K562 (cell line): ENCODE measurements at regions of chr16 and their contacts with region 1.

Region 1: GRCh38 chr16:4402439-4403132 is 13.8 kb downstream of the CORO7 start:
- DNase-seq: peak; percentile 84 to 90 (median 86)
- ATAC-seq: peak; percentile 94
- H3K4me3 ChIP-seq: peak overlapping the region; percentile 25; the same call in 1 of the 2 replicates
- H3K27ac ChIP-seq: no peak overlapping the region; the same call in 2 of the 3 replicates
- H3K4me1 ChIP-seq: peaks cover 0 to 29% of the 10 kb centered on the region in 2 experiments; a peak in 2 of 5 replicates
- H3K27me3 ChIP-seq: no peaks in the 10 kb centered on the region
- CTCF ChIP-seq: peak; percentile 70 to 90 (median 79)
- EP300 ChIP-seq: no peak
- POLR2A ChIP-seq: no peak
- RAD21 ChIP-seq: peak; percentile 91

Region 2: GRCh38 chr16:3983081-3983520 is 419.5 kb before region 1 on chr16:
- CTCF ChIA-PET with region 1: interaction called, 3 read pairs
- POLR2A ChIA-PET with region 1: no interaction called
- in situ Hi-C with region 1: no loop called
- intact Hi-C with region 1: loop called (anchors 10 kb)
- DNase-seq: peak; percentile 78 to 82 (median 80)
- ATAC-seq: peak; percentile 99
- H3K4me3 ChIP-seq: no peak overlapping the region
- H3K27ac ChIP-seq: no peak overlapping the region
- H3K4me1 ChIP-seq: peaks cover 0 to 38% of the 10 kb centered on the region in 2 experiments; a peak in 3 of 5 replicates
- H3K27me3 ChIP-seq: peaks cover 61 to 97% of the 10 kb centered on the region in 2 experiments
- CTCF ChIP-seq: peak; percentile 84 to 95 (median 92)
- EP300 ChIP-seq: no peak
- POLR2A ChIP-seq: no peak
- RAD21 ChIP-seq: peak; percentile 74 to 90

Region 3: DNA sequence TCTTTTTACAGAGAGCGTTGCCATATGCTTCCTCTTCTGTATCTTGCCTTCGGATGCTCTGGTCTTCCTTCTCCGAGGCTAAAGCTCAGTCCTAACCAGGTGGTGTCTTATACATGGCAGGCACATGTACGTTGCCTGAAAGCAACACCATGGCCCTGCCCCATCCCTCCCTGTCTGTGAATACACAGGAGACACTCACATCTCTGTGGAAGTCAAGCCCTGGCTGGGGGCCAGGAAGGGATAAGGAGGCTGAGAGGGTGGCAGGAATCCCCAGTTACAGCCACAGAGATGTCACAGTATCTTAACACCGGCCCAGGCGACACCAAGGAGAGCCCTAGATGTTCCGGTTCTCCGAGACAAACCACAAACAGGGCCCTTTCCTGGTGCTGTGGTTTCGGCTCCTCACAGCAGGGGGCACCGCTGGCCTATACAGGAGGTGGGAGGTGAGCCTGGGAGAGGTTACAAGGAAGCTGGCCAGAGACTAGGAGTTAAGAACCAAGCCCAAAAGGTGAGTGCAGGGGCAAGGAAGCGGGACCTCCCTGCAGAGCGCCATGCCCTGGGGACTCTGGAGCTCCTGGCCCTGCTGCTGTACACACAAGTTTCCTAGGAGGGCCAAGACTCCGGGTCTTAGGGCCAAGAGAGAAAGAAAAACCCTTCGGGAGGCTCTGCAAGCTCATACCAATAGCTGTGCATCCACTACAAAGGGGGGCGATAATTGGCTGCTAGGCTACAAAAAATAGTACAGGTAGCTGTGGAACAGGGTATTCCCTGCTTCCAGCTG is 202.4 kb before region 1 on chr16:
- CTCF ChIA-PET with region 1: interaction called, 3 read pairs
- POLR2A ChIA-PET with region 1: interaction called, 3 read pairs
- in situ Hi-C with region 1: no loop called
- intact Hi-C with region 1: loop called (anchors 10 kb)
- DNase-seq: peak; percentile 73 to 80 (median 78)
- ATAC-seq: peak; percentile 96
- H3K4me3 ChIP-seq: no peak overlapping the region
- H3K27ac ChIP-seq: no peak overlapping the region
- H3K4me1 ChIP-seq: peaks cover 4 to 5% of the 10 kb centered on the region in 2 experiments; a peak in 3 of 5 replicates
- H3K27me3 ChIP-seq: peaks cover 12 to 50% of the 10 kb centered on the region in 2 experiments; a peak in 4 of 5 replicates
- CTCF ChIP-seq: peak; percentile 82 to 88 (median 87)
- EP300 ChIP-seq: no peak
- POLR2A ChIP-seq: no peak
- RAD21 ChIP-seq: peak; percentile 83 to 92

Region 4: GRCh38 chr16:4261557-4262172 is 140.9 kb before region 1 on chr16:
- CTCF ChIA-PET with region 1: interaction called, 9 read pairs
- POLR2A ChIA-PET with region 1: interaction called, 4 read pairs
- in situ Hi-C with region 1: no loop called
- intact Hi-C with region 1: loop called (anchors 5 kb)
- DNase-seq: peak; percentile 61 to 78 (median 68)
- ATAC-seq: peak; percentile 77
- H3K4me3 ChIP-seq: no peak overlapping the region
- H3K27ac ChIP-seq: no peak overlapping the region
- H3K4me1 ChIP-seq: peaks cover 9 to 53% of the 10 kb centered on the region in 2 experiments; a peak in 3 of 5 replicates
- H3K27me3 ChIP-seq: no peaks in the 10 kb centered on the region
- CTCF ChIP-seq: peak; percentile 73 to 85 (median 78)
- EP300 ChIP-seq: no peak
- POLR2A ChIP-seq: no peak
- RAD21 ChIP-seq: peak; percentile 17 to 70; a peak in 3 of 4 replicates

Region 5: GRCh38 chr16:4344983-4345835 is 57.4 kb before region 1 on chr16:
- CTCF ChIA-PET with region 1: no interaction called
- POLR2A ChIA-PET with region 1: no interaction called
- in situ Hi-C with region 1: no loop called
- intact Hi-C with region 1: no loop called
- DNase-seq: no peak
- ATAC-seq: no peak
- H3K4me3 ChIP-seq: no peak overlapping the region
- H3K27ac ChIP-seq: 0 out of 3 replicates have a peak overlapping the region, but pooled peaks have one; percentile 13
- H3K4me1 ChIP-seq: peaks cover 17 to 43% of the 10 kb centered on the region in 2 experiments; a peak in 4 of 5 replicates
- H3K27me3 ChIP-seq: no peaks in the 10 kb centered on the region
- CTCF ChIP-seq: no peak
- EP300 ChIP-seq: no peak
- POLR2A ChIP-seq: no peak
- RAD21 ChIP-seq: no peak

Region 6: DNA sequence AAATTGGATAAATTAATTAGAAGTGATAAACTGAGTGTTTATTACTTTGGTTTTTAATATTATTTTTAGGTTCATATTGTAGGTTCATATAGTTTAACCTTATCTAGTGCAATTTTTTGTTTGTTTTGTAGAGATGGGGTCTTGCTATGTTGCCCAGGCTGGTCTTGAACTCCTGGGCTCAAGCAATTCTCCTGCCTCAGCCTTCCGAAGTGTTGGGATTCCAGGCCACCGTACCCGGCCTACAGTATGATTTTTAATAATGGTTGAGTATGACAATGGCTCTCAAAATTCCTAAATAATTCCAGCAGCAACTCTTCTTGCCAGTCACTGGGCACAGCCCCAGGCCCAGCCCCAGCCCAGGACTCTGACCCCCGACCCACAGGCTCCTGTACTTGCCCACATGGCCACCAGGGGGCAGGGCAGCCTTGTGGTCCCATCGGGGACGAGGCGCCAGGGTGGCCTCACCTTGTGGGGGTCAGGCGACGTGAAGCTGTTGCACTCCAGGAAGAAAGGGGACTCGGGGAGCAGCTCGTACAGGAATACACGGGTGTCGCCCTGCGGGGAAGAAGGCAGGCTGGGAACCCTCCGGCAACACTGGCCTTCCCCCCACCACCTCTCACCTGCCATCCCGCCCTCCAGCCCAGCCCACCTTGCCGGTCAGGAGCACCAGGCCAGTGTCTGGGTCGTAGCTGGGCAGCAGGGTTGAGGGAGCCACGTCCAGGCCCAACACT is 43.6 kb before region 1 on chr16:
- CTCF ChIA-PET with region 1: interaction called, 70 read pairs
- POLR2A ChIA-PET with region 1: interaction called, 9 read pairs
- in situ Hi-C with region 1: loop called (anchors 5 kb)
- intact Hi-C with region 1: loop called (anchors 1 kb)
- DNase-seq: peak; percentile 74 to 80 (median 79)
- ATAC-seq: peak; percentile 86
- H3K4me3 ChIP-seq: no peak overlapping the region
- H3K27ac ChIP-seq: no peak overlapping the region
- H3K4me1 ChIP-seq: peaks cover 0 to 43% of the 10 kb centered on the region in 2 experiments; a peak in 2 of 5 replicates
- H3K27me3 ChIP-seq: no peaks in the 10 kb centered on the region
- CTCF ChIP-seq: peak; percentile 84 to 92 (median 91)
- EP300 ChIP-seq: no peak
- POLR2A ChIP-seq: no peak
- RAD21 ChIP-seq: peak; percentile 82 to 90

Region 7: DNA sequence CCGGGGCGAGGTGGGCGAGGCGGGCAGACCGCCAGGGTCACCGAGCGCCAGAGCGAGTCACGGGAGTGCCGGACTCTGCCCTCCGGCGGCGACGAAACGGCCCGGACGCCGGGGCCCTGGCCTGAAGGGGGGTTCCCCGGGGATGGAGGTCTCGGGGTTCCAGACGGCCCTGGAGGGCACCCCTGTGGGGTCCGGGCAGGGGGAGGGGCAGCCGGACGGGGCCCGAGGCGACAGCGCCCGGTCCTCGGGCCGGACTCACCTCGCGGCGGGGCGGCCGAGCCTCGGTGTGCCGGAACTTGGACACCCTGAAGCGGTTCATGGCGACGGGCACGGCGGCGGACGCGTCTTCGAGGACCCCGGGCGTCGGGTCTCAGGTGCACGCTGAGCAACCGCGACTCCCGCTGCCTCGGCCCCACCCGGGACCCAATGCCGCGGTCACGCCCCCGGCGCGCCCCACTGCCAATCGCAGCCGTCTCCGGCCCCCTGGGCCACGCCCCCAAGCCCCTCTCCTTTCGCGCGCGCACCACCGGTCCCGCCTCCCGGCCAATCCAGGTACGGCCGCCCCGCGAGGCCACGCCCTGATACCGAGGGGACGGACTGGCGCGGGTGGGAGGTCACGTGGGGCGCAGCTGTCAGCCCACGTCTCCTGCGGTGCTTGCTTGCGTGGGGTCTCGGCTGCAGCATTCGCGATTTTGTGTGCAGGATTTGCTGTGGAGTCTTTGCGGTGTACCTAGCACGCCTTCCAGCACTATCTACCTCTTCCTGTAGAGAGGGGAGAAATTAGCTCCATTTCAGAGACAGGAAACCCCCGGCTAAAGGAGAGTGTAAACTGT is 13.8 kb after region 1 on chr16 and contains the start of gene CORO7:
- CTCF ChIA-PET with region 1: no interaction called
- POLR2A ChIA-PET with region 1: interaction called, 35 read pairs
- in situ Hi-C with region 1: no loop called
- intact Hi-C with region 1: no loop called
- DNase-seq: peak; percentile 97 to 98 (median 98)
- ATAC-seq: peak; percentile 97
- H3K4me3 ChIP-seq: peak within 1 kb of the TSS; percentile 91
- H3K27ac ChIP-seq: peak within 1 kb of the TSS; percentile 93
- H3K4me1 ChIP-seq: peaks cover 21 to 38% of the 10 kb centered on the region in 2 experiments; a peak in 4 of 5 replicates
- H3K27me3 ChIP-seq: no peaks in the 10 kb centered on the region
- CTCF ChIP-seq: 0 out of 6 replicates have a peak, but pooled peaks of 1 of the 3 experiments have one; percentile 1
- EP300 ChIP-seq: no peak
- POLR2A ChIP-seq: peak; percentile 74
- RAD21 ChIP-seq: no peak
- polyA plus RNA-seq, gene CORO7: 0.45 to 0.51 TPM